CD4-positive, alpha-beta memory T cell (primary cell): ENCODE measurements at regions of chr5 and their contacts with region 1.

Region 1: GRCh38 chr5:37412515-37413277 is 33.6 kb downstream of the WDR70 start:
- DNase-seq: peak; percentile 28 to 49 (median 35)
- H3K4me3 ChIP-seq: no peak overlapping the region
- H3K4me3 Mint-ChIP-seq: no peak overlapping the region
- H3K27ac ChIP-seq: no peak overlapping the region
- H3K27ac Mint-ChIP-seq: no peak overlapping the region
- H3K4me1 ChIP-seq: no peaks in the 10 kb centered on the region
- H3K4me1 Mint-ChIP-seq: peaks cover 0 to 1% (median 0%) of the 10 kb centered on the region in 4 donors
- H3K27me3 ChIP-seq: no peaks in the 10 kb centered on the region
- H3K27me3 Mint-ChIP-seq: no peaks in the 10 kb centered on the region

Region 2: GRCh38 chr5:37308796-37309195 is 103.9 kb before region 1 on chr5:
- CTCF ChIA-PET with region 1: no interaction called
- POLR2A ChIA-PET with region 1: no interaction called
- intact Hi-C with region 1: no loop called
- DNase-seq: no peak
- H3K4me3 ChIP-seq: no peak overlapping the region
- H3K4me3 Mint-ChIP-seq: no peak overlapping the region
- H3K27ac ChIP-seq: no peak overlapping the region
- H3K27ac Mint-ChIP-seq: peak overlapping the region in 1 of 7 donors; percentile 17
- H3K4me1 ChIP-seq: no peaks in the 10 kb centered on the region
- H3K4me1 Mint-ChIP-seq: peaks cover 0 to 2% (median under 1%) of the 10 kb centered on the region in 4 donors
- H3K27me3 ChIP-seq: no peaks in the 10 kb centered on the region
- H3K27me3 Mint-ChIP-seq: no peaks in the 10 kb centered on the region

Region 3: GRCh38 chr5:37424441-37424840 is 11.7 kb after region 1 on chr5:
- CTCF ChIA-PET with region 1: interaction called, 13 read pairs
- POLR2A ChIA-PET with region 1: no interaction called
- intact Hi-C with region 1: no loop called
- DNase-seq: no peak
- H3K4me3 ChIP-seq: no peak overlapping the region
- H3K4me3 Mint-ChIP-seq: no peak overlapping the region
- H3K27ac ChIP-seq: no peak overlapping the region
- H3K27ac Mint-ChIP-seq: no peak overlapping the region
- H3K4me1 ChIP-seq: no peaks in the 10 kb centered on the region
- H3K4me1 Mint-ChIP-seq: peaks cover 0 to under 1% (median under 1%) of the 10 kb centered on the region in 4 donors
- H3K27me3 ChIP-seq: no peaks in the 10 kb centered on the region
- H3K27me3 Mint-ChIP-seq: no peaks in the 10 kb centered on the region

Region 4: DNA sequence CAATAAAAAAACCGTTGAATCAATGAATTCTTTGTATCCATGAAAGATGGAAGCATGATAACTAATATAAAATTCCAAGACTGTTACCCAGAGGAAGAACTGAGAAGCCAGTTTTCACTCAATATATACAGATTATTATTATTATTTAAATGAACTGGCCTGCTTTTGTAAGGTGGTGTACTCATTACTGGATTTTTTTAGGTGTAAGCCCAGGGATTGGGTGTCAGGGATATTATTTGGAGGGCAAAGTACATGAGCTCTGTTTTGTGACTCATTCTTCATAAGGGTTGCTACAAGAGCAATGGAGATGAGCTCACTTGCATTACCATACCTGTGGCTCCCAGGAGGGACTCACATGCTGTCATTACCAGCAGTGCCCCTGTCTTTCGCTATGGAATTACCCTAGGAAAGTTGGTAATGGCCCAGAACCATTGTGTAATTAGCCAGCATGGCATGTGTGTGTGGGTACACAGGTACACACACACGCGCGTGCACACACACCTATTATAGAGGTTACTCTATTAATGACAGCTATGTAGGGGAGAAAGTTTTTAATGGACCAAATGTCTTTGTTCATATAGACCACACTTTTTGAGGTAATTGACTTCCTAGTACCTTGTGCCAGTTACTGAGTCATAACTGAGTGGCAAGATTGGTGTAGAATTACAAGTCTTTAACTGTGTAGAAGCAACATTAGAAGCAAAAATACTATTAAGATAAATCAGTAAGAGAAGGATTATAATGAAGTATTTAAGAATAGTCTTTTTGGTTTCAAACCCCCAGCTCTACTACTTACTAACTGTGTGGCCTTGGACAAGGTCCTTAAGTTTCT is 283.7 kb after region 1 on chr5:
- CTCF ChIA-PET with region 1: no interaction called
- POLR2A ChIA-PET with region 1: no interaction called
- intact Hi-C with region 1: no loop called
- DNase-seq: no peak
- H3K4me3 ChIP-seq: no peak overlapping the region
- H3K4me3 Mint-ChIP-seq: no peak overlapping the region
- H3K27ac ChIP-seq: no peak overlapping the region
- H3K27ac Mint-ChIP-seq: no peak overlapping the region
- H3K4me1 ChIP-seq: no peaks in the 10 kb centered on the region
- H3K4me1 Mint-ChIP-seq: no peaks in the 10 kb centered on the region
- H3K27me3 ChIP-seq: no peaks in the 10 kb centered on the region
- H3K27me3 Mint-ChIP-seq: no peaks in the 10 kb centered on the region

Region 5: DNA sequence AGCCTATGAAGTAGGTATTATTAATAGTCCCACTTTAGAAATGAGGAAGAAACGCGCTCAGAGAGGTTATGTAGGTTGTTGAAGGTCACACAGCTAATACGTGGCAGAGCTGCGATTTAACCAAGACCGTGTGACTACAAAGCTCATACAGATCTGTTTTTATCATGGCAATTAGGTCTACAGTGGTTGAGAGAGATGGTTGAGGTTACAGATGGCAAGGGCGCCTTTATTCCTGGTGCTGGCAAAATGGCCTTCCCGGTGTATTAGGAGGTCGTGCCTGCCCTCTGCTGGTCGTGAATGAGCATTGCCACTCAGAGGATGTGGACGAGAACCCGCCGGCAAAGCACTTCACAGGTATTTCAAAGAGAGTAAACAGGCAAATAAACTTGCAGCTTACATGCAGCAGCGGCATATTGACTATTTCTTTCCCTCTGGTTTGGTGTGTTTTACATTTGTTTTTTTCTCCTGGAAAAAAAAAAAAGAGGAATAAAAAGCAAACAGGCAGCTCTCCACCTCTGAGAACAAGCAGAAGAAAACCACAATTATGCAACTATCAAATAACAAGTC is 780.4 kb after region 1 on chr5:
- CTCF ChIA-PET with region 1: interaction called, 10 read pairs
- POLR2A ChIA-PET with region 1: no interaction called
- intact Hi-C with region 1: no loop called
- DNase-seq: peak in 4 of 5 donors; percentile 18 to 32 (median 26)
- H3K4me3 ChIP-seq: no peak overlapping the region
- H3K4me3 Mint-ChIP-seq: no peak overlapping the region
- H3K27ac ChIP-seq: no peak overlapping the region
- H3K27ac Mint-ChIP-seq: no peak overlapping the region
- H3K4me1 ChIP-seq: no peaks in the 10 kb centered on the region
- H3K4me1 Mint-ChIP-seq: peaks cover 0 to 5% (median 3%) of the 10 kb centered on the region in 4 donors
- H3K27me3 ChIP-seq: no peaks in the 10 kb centered on the region
- H3K27me3 Mint-ChIP-seq: peaks cover 17 to 25% of the 10 kb centered on the region in 2 donors